ENCODE measurements at regions of chr18 and their contacts with region 1.

Region 1: DNA sequence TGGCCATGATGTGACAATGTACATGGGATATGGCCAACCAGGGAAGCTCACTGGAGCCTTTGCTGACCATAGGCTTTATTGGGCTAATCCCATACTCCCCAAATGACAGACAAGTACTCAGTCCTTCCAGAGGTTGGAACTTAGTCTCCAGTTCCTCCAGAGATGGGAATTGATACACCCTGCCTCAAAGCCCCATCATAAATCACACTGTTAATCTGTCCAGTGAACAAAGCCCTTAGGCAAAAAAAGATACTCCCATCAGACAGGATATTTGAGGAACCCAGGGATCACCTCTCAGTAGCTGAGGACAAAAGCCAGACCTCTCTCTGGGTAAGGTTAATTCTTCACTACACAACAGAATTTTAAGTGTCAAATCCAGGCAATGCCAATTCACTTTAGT is 247.5 kb upstream of the CDH20 start:
- DNase-seq: no peak
- H3K4me3 ChIP-seq: no peak overlapping the region
- H3K27ac ChIP-seq: no peak overlapping the region
- H3K4me1 ChIP-seq: no peaks in the 10 kb centered on the region
- H3K27me3 ChIP-seq: no peaks in the 10 kb centered on the region
- CTCF ChIP-seq: peak in 1 of 2 donors; percentile 14

Region 2: GRCh38 chr18:60996326-60996725 is 89.4 kb before region 1 on chr18:
- CTCF ChIA-PET with region 1: no interaction called
- dilution Hi-C with region 1: no loop called
- in situ Hi-C with region 1: no loop called
- intact Hi-C with region 1: no loop called
- DNase-seq: no peak
- H3K4me3 ChIP-seq: no peak overlapping the region
- H3K27ac ChIP-seq: no peak overlapping the region
- H3K4me1 ChIP-seq: no peaks in the 10 kb centered on the region
- H3K27me3 ChIP-seq: no peaks in the 10 kb centered on the region
- CTCF ChIP-seq: no peak

Region 3: DNA sequence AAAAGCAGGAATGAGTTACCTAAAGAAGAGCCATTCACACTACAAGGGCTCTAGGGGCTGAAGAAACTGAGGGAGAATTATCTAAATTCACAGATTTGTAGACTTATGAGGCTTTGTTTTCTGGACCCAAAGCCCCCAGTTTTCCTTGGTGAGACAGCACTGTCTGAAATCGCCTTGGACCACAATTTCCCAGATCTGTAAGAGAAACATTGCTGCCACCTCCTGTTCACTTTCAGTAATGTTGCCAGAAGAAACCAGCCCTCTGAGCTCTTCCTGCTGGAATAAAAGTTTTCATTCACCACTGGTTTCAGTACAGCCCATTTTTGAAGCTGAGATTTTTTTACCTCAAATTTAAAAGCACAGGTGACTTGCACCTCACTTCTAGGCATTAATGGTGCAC is 416.7 kb after region 1 on chr18:
- CTCF ChIA-PET with region 1: no interaction called
- dilution Hi-C with region 1: no loop called
- in situ Hi-C with region 1: no loop called
- intact Hi-C with region 1: loop called (anchors 2 kb)
- DNase-seq: peak; percentile 32
- H3K4me3 ChIP-seq: no peak overlapping the region
- H3K27ac ChIP-seq: no peak overlapping the region
- H3K4me1 ChIP-seq: no peaks in the 10 kb centered on the region
- H3K27me3 ChIP-seq: no peaks in the 10 kb centered on the region
- CTCF ChIP-seq: peak; percentile 64 to 79